Naive thymus-derived CD4-positive, alpha-beta T cell (primary cell): ENCODE measurements at regions of chr13 and their contacts with region 1.

Region 1: GRCh38 chr13:48532506-48533499 is at the start of gene RCBTB2:
- DNase-seq: peak; percentile 97 to 100 (median 99)
- ATAC-seq: peak; percentile 92
- H3K4me3 ChIP-seq: peak within 1 kb of the TSS; percentile 80
- H3K4me3 Mint-ChIP-seq: peak within 1 kb of the TSS; percentile 83 to 99 (median 94)
- H3K27ac ChIP-seq: peak within 1 kb of the TSS; percentile 96
- H3K27ac Mint-ChIP-seq: peak within 1 kb of the TSS; percentile 98 to 100 (median 99)
- H3K4me1 ChIP-seq: peaks cover 10 to 16% of the 10 kb centered on the region in 2 donors
- H3K4me1 Mint-ChIP-seq: peaks cover 11 to 44% (median 31%) of the 10 kb centered on the region in 7 donors
- H3K27me3 ChIP-seq: no peaks in the 10 kb centered on the region
- H3K27me3 Mint-ChIP-seq: peaks cover 0 to 18% (median 0%) of the 10 kb centered on the region in 5 donors
- total RNA-seq, gene RCBTB2: 7.6 to 17.8 (median 10.1) TPM

Region 2: GRCh38 chr13:48037346-48038173 is 495.2 kb before region 1 on chr13 and contains the start of gene NUDT15:
- CTCF ChIA-PET with region 1: no interaction called
- POLR2A ChIA-PET with region 1: interaction called, 6 read pairs
- intact Hi-C with region 1: loop called in 1 of 2 experiments (anchors 1 kb)
- DNase-seq: peak; percentile 93 to 98 (median 97)
- ATAC-seq: peak; percentile 96
- H3K4me3 ChIP-seq: peak within 1 kb of the TSS; percentile 90
- H3K4me3 Mint-ChIP-seq: peak within 1 kb of the TSS; percentile 82 to 98 (median 95)
- H3K27ac ChIP-seq: peak within 1 kb of the TSS; percentile 91
- H3K27ac Mint-ChIP-seq: peak within 1 kb of the TSS; percentile 96 to 100 (median 97)
- H3K4me1 ChIP-seq: peaks cover 14 to 15% of the 10 kb centered on the region in 2 donors
- H3K4me1 Mint-ChIP-seq: peaks cover 15 to 52% (median 40%) of the 10 kb centered on the region in 7 donors
- H3K27me3 ChIP-seq: no peaks in the 10 kb centered on the region
- H3K27me3 Mint-ChIP-seq: no peaks in the 10 kb centered on the region
- total RNA-seq, gene NUDT15: 4.3 to 13.6 (median 8.7) TPM

Region 3: GRCh38 chr13:48400850-48401291 is 131.9 kb before region 1 on chr13:
- CTCF ChIA-PET with region 1: interaction called, 6 read pairs
- POLR2A ChIA-PET with region 1: interaction called, 24 read pairs
- intact Hi-C with region 1: loop called in 1 of 2 experiments (anchors 1 kb)
- DNase-seq: peak in 2 of 9 donors; percentile 36 to 42
- ATAC-seq: peak; percentile 74
- H3K4me3 ChIP-seq: no peak overlapping the region
- H3K4me3 Mint-ChIP-seq: peak overlapping the region; percentile 1 to 83 (median 54)
- H3K27ac ChIP-seq: peak overlapping the region; percentile 49
- H3K27ac Mint-ChIP-seq: peak overlapping the region; percentile 1 to 90 (median 50)
- H3K4me1 ChIP-seq: peaks cover 33 to 40% of the 10 kb centered on the region in 2 donors
- H3K4me1 Mint-ChIP-seq: peaks cover 23 to 78% (median 63%) of the 10 kb centered on the region in 7 donors
- H3K27me3 ChIP-seq: no peaks in the 10 kb centered on the region
- H3K27me3 Mint-ChIP-seq: no peaks in the 10 kb centered on the region

Region 4: DNA sequence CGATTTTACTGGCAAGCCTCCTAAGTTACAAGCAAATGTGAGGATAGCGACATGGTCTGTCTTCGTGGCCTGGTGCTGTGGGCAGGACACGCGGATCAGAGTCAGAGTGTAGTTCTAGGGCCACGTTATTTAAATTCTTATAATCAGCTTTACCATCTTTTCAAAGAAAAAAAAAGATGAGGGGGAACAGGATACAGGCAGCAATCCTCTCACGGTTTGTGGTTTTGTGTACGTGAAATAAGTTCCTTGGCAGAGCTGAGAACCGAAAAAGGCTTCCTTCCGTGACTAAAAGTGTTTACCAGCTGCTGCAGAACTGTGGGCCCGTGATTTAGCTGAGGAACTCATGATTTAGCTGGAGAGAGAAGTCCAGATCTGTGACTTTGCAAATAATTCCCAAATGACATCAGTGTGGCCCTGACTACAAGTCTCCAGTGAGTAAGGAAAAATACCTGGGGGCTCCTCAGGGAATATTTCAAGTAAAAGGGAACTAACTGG is 27.2 kb before region 1 on chr13:
- CTCF ChIA-PET with region 1: interaction called, 4 read pairs
- POLR2A ChIA-PET with region 1: interaction called, 83 read pairs
- intact Hi-C with region 1: loop called (anchors 1 kb)
- DNase-seq: peak in 7 of 9 donors; percentile 73 to 88 (median 84)
- ATAC-seq: peak; percentile 85
- H3K4me3 ChIP-seq: peak overlapping the region; percentile 37
- H3K4me3 Mint-ChIP-seq: peak overlapping the region; percentile 51 to 86 (median 76)
- H3K27ac ChIP-seq: peak overlapping the region; percentile 59
- H3K27ac Mint-ChIP-seq: peak overlapping the region; percentile 83 to 98 (median 91)
- H3K4me1 ChIP-seq: peaks cover 34 to 47% of the 10 kb centered on the region in 2 donors
- H3K4me1 Mint-ChIP-seq: peaks cover 47 to 78% (median 61%) of the 10 kb centered on the region in 7 donors
- H3K27me3 ChIP-seq: no peaks in the 10 kb centered on the region
- H3K27me3 Mint-ChIP-seq: peaks cover 0 to 11% (median 0%) of the 10 kb centered on the region in 5 donors

Region 5: DNA sequence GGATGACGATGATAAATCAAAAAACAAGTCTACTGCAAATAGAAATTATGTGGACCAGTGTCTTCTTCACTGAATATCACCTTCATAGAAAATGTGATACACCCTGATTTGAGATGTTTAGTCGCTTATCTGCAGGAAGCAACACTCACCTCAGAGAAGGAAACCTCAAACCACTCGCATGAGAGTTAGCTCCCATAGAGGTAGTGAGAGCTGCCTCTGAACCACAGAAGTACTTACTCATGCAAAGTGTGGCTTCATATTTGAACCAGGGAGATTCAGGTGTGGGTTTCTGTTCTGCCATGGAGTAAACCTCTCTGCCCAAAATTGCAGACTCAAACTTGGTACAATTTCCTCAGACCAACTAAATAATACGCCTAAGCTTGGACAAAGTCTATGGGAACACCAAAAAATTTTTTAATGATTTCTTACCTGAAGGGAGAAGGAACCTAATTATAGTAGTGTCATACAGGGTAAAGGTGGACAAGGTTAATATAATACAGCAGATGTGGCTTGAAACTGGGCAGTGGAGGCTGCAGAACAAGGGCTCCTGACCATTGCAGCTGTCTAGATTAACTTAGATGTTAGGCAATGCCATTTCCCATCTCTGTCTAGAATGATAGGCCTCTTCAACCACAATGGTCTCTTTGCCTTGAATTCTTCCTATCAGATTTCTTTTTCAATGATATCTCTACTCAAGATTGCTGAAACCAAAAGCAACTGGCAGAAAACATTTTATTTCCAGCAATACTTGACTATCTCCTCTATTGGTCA is 29.7 kb after region 1 on chr13:
- CTCF ChIA-PET with region 1: interaction called, 5 read pairs
- POLR2A ChIA-PET with region 1: interaction called, 68 read pairs
- intact Hi-C with region 1: loop called (anchors 1 kb)
- DNase-seq: peak in 8 of 9 donors; percentile 67 to 87 (median 79)
- ATAC-seq: peak; percentile 100
- H3K4me3 ChIP-seq: peak overlapping the region; percentile 12
- H3K4me3 Mint-ChIP-seq: peak overlapping the region in 9 of 10 donors; percentile 0 to 68 (median 54)
- H3K27ac ChIP-seq: no peak overlapping the region
- H3K27ac Mint-ChIP-seq: peak overlapping the region in 2 of 9 donors; percentile 71 to 82
- H3K4me1 ChIP-seq: peaks cover 22 to 31% of the 10 kb centered on the region in 2 donors
- H3K4me1 Mint-ChIP-seq: peaks cover 28 to 51% (median 36%) of the 10 kb centered on the region in 7 donors
- H3K27me3 ChIP-seq: no peaks in the 10 kb centered on the region
- H3K27me3 Mint-ChIP-seq: peaks cover 7 to 67% (median 13%) of the 10 kb centered on the region in 5 donors

Region 6: DNA sequence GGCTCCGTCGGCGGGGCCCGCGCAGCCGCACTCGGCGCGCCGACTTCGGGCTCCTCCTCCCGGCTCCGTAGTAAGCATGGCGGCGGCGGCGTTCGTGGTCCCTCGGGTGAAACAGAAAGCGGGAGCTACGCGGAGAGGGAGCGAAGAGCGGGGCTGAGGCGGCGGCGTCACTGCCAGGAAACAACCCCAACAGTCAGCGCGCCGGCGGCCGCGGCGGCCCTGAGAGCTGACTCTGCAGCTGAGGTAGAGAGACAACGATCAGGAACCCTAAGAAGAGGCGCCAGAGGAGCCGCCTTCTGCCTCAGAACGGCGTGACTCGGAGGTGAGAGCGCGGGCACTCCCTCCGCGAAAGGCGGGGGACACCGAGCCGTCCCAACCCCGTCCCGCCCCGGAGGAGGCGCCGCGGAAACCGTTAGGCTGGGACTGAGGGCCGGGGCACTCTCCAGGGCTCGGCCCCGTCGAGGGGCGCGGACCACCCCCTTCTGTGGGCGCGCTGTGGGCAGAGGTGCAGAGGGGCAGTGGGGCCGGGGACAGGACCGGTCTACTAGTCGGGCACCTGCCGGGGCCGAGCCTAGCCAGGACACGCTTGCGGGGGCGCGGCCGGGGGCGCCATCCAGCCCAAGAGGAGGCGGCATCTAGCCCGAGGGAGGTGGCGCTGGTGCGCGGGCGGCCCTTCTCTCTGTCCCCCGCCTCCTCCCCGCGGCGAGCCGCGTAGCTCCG is 443.2 kb after region 1 on chr13 and contains the start of gene FNDC3A:
- CTCF ChIA-PET with region 1: no interaction called
- POLR2A ChIA-PET with region 1: interaction called, 4 read pairs
- intact Hi-C with region 1: loop called in 1 of 2 experiments (anchors 1 kb)
- DNase-seq: peak; percentile 84 to 90 (median 86)
- ATAC-seq: peak; percentile 87
- H3K4me3 ChIP-seq: peak within 1 kb of the TSS; percentile 82
- H3K4me3 Mint-ChIP-seq: peak within 1 kb of the TSS; percentile 92 to 100 (median 98)
- H3K27ac ChIP-seq: peak within 1 kb of the TSS; percentile 95
- H3K27ac Mint-ChIP-seq: peak within 1 kb of the TSS; percentile 93 to 99 (median 99)
- H3K4me1 ChIP-seq: peaks cover 13 to 28% of the 10 kb centered on the region in 2 donors
- H3K4me1 Mint-ChIP-seq: peaks cover 35 to 69% (median 49%) of the 10 kb centered on the region in 7 donors
- H3K27me3 ChIP-seq: no peaks in the 10 kb centered on the region
- H3K27me3 Mint-ChIP-seq: peaks cover 0 to 6% (median 0%) of the 10 kb centered on the region in 5 donors
- total RNA-seq, gene FNDC3A: 34.2 to 46.4 (median 39.1) TPM